Activated T-helper 1 cell treated with anti-CD3 and anti-CD28 coated beads, Interleukin-12 subunit alpha, Interleukin-12 subunit beta, Interleukin-2, Interleukin-4 antibody, amounts not matched to agents 30 ng/mL and 10 ng/mL and 1 ng/mL, durations not matched to agents 14 hours and 24 hours and 36 hours (primary cell): ENCODE measurements at regions of chr7 and their contacts with region 1.

Region 1: GRCh38 chr7:134750083-134751062 is 29.1 kb upstream of the CALD1 start:
- DNase-seq: peak; percentile 30
- H3K4me3 Mint-ChIP-seq: no peak overlapping the region
- H3K27ac Mint-ChIP-seq: peak overlapping the region; percentile 32
- H3K4me1 Mint-ChIP-seq: peaks cover 14% of the 10 kb centered on the region
- H3K27me3 Mint-ChIP-seq: peaks cover 2% of the 10 kb centered on the region

Region 2: DNA sequence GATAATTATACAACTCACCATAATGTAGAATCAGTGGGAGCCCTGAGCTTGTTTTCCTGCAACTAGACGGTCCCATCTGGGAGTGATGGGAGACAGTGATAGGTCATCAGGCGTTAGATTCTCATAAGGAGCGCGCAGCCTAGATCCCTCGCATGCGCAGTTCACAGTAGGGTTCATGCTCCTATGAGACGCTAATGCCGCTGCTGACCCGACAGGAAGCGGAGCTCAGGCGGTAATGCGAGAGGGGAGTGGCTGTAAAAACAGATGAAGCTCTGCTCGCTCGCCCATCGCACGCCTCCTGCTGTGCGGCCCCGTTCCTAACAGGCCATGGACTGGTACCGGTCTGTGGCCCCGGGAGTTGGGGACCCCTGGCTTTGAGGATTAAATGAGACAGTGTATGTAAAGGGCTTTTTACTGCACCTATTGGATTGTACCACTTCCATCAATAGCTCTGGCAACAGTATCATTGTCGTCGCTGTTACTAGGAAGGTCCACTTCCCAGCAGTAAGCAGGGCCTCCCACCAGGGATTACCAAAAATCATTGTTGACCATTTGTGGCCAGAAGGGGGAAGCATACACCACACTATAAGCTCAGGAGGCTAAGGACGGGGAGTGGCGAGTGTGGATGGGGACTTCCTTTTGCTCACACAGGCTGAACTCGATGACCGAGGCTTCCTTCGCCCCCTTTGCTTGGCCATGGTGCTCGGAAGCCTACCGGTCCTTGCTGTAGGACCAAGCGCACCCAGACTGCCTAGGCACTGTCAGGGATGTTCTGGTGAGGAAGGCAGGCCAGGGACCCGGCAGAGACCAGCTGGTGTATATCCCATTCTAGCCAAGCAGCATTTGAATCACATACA is 317.8 kb before region 1 on chr7:
- intact Hi-C with region 1: loop called (anchors 1 kb)
- DNase-seq: peak; percentile 61
- H3K4me3 Mint-ChIP-seq: peak overlapping the region; percentile 78
- H3K27ac Mint-ChIP-seq: peak overlapping the region; percentile 79
- H3K4me1 Mint-ChIP-seq: peaks cover 23% of the 10 kb centered on the region
- H3K27me3 Mint-ChIP-seq: peaks cover 3% of the 10 kb centered on the region

Region 3: GRCh38 chr7:134690016-134690415 is 60.4 kb before region 1 on chr7:
- intact Hi-C with region 1: loop called (anchors 1 kb)
- DNase-seq: no peak
- H3K4me3 Mint-ChIP-seq: no peak overlapping the region
- H3K27ac Mint-ChIP-seq: no peak overlapping the region
- H3K4me1 Mint-ChIP-seq: peaks cover 6% of the 10 kb centered on the region
- H3K27me3 Mint-ChIP-seq: peaks cover 4% of the 10 kb centered on the region

Region 4: GRCh38 chr7:134737566-134738345 is 12.6 kb before region 1 on chr7:
- intact Hi-C with region 1: loop called (anchors 1 kb)
- DNase-seq: peak; percentile 5
- H3K4me3 Mint-ChIP-seq: no peak overlapping the region
- H3K27ac Mint-ChIP-seq: peak overlapping the region; percentile 80
- H3K4me1 Mint-ChIP-seq: peaks cover 22% of the 10 kb centered on the region
- H3K27me3 Mint-ChIP-seq: peaks cover 4% of the 10 kb centered on the region

Region 5: DNA sequence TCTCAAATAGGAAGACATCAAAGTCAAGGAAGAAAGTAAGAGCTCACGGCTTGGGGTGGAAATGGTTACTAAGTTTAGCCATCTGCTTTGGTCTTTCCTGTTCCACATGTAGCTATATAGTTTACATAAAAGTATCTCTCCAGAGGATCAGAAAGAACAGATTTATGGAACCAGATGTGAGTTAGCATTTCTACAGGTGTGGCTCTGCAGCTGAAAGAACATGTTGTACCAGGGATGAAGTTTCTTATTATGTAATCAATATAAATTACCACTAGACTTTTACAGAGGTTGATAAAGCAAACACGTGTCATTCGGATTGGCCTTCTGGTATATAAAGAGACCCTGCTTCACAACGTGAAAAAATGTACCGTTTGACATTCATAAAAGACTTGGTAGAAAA is 49.0 kb after region 1 on chr7:
- intact Hi-C with region 1: no loop called
- DNase-seq: no peak
- H3K4me3 Mint-ChIP-seq: no peak overlapping the region
- H3K27ac Mint-ChIP-seq: no peak overlapping the region
- H3K4me1 Mint-ChIP-seq: no peaks in the 10 kb centered on the region
- H3K27me3 Mint-ChIP-seq: peaks cover 9% of the 10 kb centered on the region

Region 6: DNA sequence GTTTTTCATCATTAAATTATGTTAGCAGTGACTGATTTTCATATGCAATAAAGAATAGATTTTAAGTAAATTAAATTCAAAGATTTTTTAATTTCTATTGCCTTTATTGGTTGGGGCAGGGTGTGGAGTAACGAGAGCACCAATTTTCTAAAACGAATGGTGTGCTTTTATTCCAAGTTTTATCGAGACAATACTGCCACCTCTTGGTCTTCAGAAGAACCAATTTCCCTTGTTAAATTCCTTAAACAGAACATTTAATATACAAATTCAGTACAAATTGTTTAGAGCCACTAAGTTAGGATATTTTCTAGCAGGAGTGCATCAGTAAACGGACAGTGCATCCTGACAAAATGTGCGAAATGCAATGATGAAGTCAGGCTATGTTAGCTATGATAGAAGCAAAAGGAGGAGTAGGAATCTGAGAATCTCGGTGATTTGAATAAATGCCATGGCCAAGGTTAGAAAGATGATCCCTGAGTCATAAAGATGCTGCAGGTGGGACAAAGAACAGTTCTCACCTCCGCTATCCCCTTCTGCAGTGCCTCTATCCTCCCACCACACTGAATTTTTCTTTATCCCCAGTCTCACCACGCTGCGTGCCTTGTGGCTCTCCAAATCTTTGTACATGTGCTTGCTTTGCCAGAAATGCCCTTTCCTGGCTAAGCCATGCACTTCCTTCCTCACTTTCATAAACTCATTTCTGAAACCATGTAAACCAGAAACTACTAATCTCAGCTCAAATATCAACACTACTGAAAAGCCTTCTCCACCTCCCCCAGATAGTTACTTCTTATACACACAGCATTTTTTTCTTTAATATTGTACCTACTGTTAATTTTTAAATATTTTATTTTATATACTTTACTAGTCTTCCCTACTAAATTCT is 204.1 kb after region 1 on chr7:
- intact Hi-C with region 1: loop called (anchors 2 kb)
- DNase-seq: no peak
- H3K4me3 Mint-ChIP-seq: no peak overlapping the region
- H3K27ac Mint-ChIP-seq: no peak overlapping the region
- H3K4me1 Mint-ChIP-seq: no peaks in the 10 kb centered on the region
- H3K27me3 Mint-ChIP-seq: peaks cover 2% of the 10 kb centered on the region